Activated naive CD4-positive, alpha-beta T cell treated with anti-CD3 and anti-CD28 coated beads, Interleukin-2, amount 10 ng/mL, durations not matched to agents 7 days and 5 days (primary cell): ENCODE measurements at regions of chr7 and their contacts with region 1.

Region 1: GRCh38 chr7:108146070-108146837 is 16.1 kb upstream of the LAMB4 start:
- DNase-seq: peak; percentile 67
- H3K4me3 Mint-ChIP-seq: no peak overlapping the region
- H3K27ac Mint-ChIP-seq: no peak overlapping the region
- H3K4me1 Mint-ChIP-seq: no peaks in the 10 kb centered on the region
- H3K27me3 Mint-ChIP-seq: peaks cover 5% of the 10 kb centered on the region

Region 2: DNA sequence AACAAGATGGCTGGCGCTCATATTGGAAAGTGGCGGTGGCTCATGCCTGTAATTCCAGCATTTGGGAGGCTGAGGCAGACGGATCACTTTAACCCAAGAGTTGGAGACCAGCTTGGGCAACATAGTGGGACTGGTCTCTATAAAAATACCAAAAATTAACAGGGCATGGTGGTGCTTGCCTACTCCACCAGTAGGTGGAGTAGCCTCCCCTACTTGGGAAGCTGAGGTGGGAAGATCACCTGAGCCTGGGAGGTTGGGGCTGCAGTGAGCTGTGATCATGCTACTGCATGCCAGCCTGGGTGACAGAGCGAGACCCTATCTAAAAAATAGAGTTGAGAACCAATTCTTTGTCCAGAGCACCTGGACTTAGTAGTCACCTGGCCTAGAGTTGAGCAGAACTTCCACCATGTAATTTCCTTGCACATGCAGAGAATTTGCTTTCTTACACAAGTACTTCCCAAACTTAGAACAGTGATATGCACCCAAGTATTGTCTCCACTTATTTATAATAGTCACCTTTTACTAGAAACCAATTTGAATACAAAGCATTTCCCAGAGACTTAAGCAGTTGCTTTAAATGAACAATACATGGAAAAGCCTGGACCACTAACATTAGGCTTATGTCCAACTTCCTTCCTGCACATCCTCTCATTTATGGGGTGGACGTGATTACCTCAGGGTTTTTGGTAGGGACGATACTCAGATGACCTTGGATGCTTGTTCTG is 32.0 kb before region 1 on chr7:
- CTCF ChIA-PET with region 1: interaction called, 62 read pairs
- DNase-seq: peak; percentile 36
- H3K4me3 Mint-ChIP-seq: no peak overlapping the region
- H3K27ac Mint-ChIP-seq: no peak overlapping the region
- H3K4me1 Mint-ChIP-seq: no peaks in the 10 kb centered on the region
- H3K27me3 Mint-ChIP-seq: peaks cover 5% of the 10 kb centered on the region

Region 3: DNA sequence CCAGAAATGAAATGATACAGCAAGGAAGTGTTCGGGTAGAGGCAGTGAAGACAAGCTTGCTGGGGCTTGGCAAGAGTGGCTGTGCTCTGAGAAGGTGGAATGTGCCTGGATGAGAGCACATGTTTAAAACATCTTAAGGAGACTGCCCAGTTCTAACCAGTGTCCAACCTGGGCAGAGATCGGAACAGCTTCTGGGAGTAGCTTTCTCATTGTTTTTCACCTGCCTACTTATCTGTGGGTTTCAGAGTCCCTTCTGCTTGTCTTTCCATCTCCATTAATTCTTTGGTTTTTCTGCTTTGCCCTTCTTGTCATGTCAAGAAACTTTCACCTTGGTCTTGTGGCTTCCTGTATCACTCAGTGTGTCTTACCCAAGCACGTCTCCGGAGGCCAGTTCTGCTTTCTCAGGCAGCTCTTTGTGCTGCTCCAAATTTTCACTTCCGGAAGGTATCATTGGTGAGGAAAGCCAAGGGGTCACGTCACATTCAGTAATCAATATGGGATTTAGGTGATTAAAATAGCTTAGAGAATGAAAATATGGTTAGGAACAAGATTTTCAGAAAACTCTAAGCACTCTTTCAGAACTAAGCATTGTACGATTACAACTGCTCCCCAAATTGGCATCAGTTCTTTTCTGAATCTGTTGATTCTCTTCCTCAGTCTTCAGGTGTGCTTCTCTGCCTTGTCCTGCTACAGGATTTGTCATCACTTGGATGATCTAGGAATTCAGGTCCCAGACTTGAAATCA is 10.6 kb before region 1 on chr7:
- CTCF ChIA-PET with region 1: interaction called, 15 read pairs
- DNase-seq: peak; percentile 50
- H3K4me3 Mint-ChIP-seq: no peak overlapping the region
- H3K27ac Mint-ChIP-seq: peak overlapping the region; percentile 73
- H3K4me1 Mint-ChIP-seq: peaks cover 17% of the 10 kb centered on the region
- H3K27me3 Mint-ChIP-seq: peaks cover 15% of the 10 kb centered on the region